CD8-positive, alpha-beta T cell (primary cell): ENCODE measurements at regions of chr20 and their contacts with region 1.

Region 1: DNA sequence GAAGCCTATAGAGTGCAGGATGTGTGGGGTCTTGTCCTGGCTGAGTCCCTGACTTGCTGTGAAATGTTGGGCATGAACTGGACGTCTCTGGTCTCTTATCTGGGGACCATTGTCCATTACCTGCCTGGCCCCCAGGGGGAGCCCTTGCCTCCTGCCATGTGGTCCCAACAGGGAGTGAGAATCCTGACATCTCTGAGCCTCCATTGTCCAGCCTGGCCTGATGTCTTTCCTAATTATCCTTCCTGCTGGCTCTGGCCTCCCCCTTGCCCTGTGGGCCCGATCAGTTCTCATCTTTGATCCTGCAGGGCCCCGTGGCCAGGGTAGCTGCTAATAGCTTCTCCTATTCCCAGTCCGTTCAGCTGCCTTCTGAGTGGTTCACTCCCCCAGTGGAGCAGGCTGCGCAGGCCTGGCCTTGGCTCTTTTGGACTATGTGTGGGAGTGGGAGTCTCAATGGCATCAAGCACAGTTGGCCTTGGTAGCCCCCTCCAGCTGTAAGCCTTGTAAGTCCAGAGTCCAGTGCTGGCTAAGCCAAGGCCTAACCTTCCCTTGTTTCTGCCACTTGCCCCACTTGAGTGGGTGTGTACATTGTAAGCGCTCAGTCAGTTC is 77.9 kb upstream of the RALY start:
- DNase-seq: peak; percentile 24 to 70 (median 57)
- ATAC-seq: peak; percentile 53
- H3K4me3 ChIP-seq: no peak overlapping the region
- H3K4me3 Mint-ChIP-seq: no peak overlapping the region
- H3K27ac ChIP-seq: no peak overlapping the region
- H3K27ac Mint-ChIP-seq: no peak overlapping the region
- H3K4me1 ChIP-seq: no peaks in the 10 kb centered on the region
- H3K4me1 Mint-ChIP-seq: peaks cover 12% of the 10 kb centered on the region
- H3K27me3 ChIP-seq: no peaks in the 10 kb centered on the region
- H3K27me3 Mint-ChIP-seq: peaks cover 1% of the 10 kb centered on the region
- CTCF ChIP-seq: peak; percentile 63

Region 2: GRCh38 chr20:32877507-32877906 is 1038.3 kb before region 1 on chr20:
- CTCF ChIA-PET with region 1: no interaction called
- POLR2A ChIA-PET with region 1: no interaction called
- intact Hi-C with region 1: no loop called
- DNase-seq: no peak
- ATAC-seq: no peak
- H3K4me3 ChIP-seq: no peak overlapping the region
- H3K4me3 Mint-ChIP-seq: no peak overlapping the region
- H3K27ac ChIP-seq: no peak overlapping the region
- H3K27ac Mint-ChIP-seq: no peak overlapping the region
- H3K4me1 ChIP-seq: no peaks in the 10 kb centered on the region
- H3K4me1 Mint-ChIP-seq: no peaks in the 10 kb centered on the region
- H3K27me3 ChIP-seq: no peaks in the 10 kb centered on the region
- H3K27me3 Mint-ChIP-seq: no peaks in the 10 kb centered on the region
- CTCF ChIP-seq: no peak

Region 3: GRCh38 chr20:33791959-33792597 is 123.8 kb before region 1 on chr20:
- CTCF ChIA-PET with region 1: interaction called, 19 read pairs
- POLR2A ChIA-PET with region 1: no interaction called
- intact Hi-C with region 1: loop called in 1 of 2 experiments (anchors 1 kb)
- DNase-seq: peak; percentile 19 to 73 (median 54)
- ATAC-seq: peak; percentile 71
- H3K4me3 ChIP-seq: no peak overlapping the region
- H3K4me3 Mint-ChIP-seq: no peak overlapping the region
- H3K27ac ChIP-seq: no peak overlapping the region
- H3K27ac Mint-ChIP-seq: no peak overlapping the region
- H3K4me1 ChIP-seq: no peaks in the 10 kb centered on the region
- H3K4me1 Mint-ChIP-seq: peaks cover 10% of the 10 kb centered on the region
- H3K27me3 ChIP-seq: no peaks in the 10 kb centered on the region
- H3K27me3 Mint-ChIP-seq: no peaks in the 10 kb centered on the region
- CTCF ChIP-seq: peak; percentile 82

Region 4: GRCh38 chr20:33862709-33863403 is 53.0 kb before region 1 on chr20:
- CTCF ChIA-PET with region 1: interaction called, 5 read pairs
- POLR2A ChIA-PET with region 1: no interaction called
- intact Hi-C with region 1: loop called in 1 of 2 experiments (anchors 5 kb)
- DNase-seq: peak in 8 of 9 experiments; percentile 25 to 63 (median 54)
- ATAC-seq: peak; percentile 54
- H3K4me3 ChIP-seq: no peak overlapping the region
- H3K4me3 Mint-ChIP-seq: no peak overlapping the region
- H3K27ac ChIP-seq: no peak overlapping the region
- H3K27ac Mint-ChIP-seq: no peak overlapping the region
- H3K4me1 ChIP-seq: peaks cover 28% of the 10 kb centered on the region
- H3K4me1 Mint-ChIP-seq: peaks cover 23% of the 10 kb centered on the region
- H3K27me3 ChIP-seq: no peaks in the 10 kb centered on the region
- H3K27me3 Mint-ChIP-seq: no peaks in the 10 kb centered on the region
- CTCF ChIP-seq: peak; percentile 70